KBM-7 (cell line): ENCODE measurements at regions of chr6 and their contacts with region 1.

Region 1: DNA sequence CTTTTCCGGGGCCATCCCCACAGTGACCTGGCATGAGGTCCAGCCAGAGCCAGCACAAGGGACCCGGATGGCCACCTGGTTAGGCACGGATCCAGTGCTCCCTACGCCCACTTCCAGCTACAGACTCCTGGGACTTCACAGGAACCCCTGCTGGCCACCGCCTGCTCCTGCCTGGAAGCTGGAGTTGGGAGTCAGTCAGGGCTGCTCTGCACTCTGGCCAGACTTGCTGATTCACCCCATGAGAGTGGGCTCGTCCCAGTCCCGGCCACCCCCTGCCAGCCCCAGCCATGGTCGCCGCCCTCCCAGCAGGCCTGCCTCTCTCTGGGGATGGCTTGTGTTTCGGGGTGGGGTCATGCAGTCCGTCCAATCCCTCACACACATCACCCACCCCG is 125.8 kb downstream of the DLL1 start:
- DNase-seq: no peak

Region 2: GRCh38 chr6:169810066-169810989 is 354.7 kb before region 1 on chr6:
- in situ Hi-C with region 1: no loop called
- DNase-seq: no peak

Region 3: GRCh38 chr6:170295510-170296422 is 130.7 kb after region 1 on chr6:
- in situ Hi-C with region 1: loop called (anchors 10 kb)
- DNase-seq: peak; percentile 67

Region 4: DNA sequence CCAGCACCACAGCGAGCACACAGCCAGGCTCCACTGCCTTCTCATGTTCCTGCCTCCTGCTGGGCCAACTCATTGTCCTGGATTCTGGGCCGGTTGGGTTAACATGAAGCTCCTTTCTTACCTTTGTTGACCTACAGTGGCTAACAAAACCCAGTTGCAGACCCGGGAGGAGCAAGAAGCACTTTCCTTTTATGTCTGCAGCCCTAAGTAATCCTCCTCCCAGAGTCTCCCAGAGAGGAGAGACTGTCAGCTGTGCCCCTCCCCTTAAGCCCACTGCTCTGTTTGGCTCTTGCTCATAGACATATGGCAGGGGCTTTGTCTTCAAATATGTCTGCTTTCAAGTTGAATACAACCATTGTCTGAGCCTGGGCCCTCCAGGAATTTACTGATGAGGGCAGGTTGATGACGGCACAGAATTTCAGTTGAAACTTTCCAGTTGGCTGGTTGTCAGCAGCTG is 332.8 kb after region 1 on chr6:
- in situ Hi-C with region 1: no loop called
- DNase-seq: no peak